HEK293T (cell line): ENCODE measurements at regions of chr11 and their contacts with region 1.

Region 1: GRCh38 chr11:61516675-61517572 is 8.4 kb downstream of the LRRC10B start:
- DNase-seq: peak; percentile 79

Region 2: GRCh38 chr11:61446211-61446651 is 70.7 kb before region 1 on chr11:
- CTCF ChIA-PET with region 1: interaction called, 36 read pairs
- POLR2A ChIA-PET with region 1: no interaction called
- DNase-seq: peak; percentile 85

Region 3: GRCh38 chr11:61477727-61478148 is 39.2 kb before region 1 on chr11:
- CTCF ChIA-PET with region 1: interaction called, 34 read pairs
- POLR2A ChIA-PET with region 1: interaction called, 3 read pairs
- DNase-seq: peak; percentile 77

Region 4: DNA sequence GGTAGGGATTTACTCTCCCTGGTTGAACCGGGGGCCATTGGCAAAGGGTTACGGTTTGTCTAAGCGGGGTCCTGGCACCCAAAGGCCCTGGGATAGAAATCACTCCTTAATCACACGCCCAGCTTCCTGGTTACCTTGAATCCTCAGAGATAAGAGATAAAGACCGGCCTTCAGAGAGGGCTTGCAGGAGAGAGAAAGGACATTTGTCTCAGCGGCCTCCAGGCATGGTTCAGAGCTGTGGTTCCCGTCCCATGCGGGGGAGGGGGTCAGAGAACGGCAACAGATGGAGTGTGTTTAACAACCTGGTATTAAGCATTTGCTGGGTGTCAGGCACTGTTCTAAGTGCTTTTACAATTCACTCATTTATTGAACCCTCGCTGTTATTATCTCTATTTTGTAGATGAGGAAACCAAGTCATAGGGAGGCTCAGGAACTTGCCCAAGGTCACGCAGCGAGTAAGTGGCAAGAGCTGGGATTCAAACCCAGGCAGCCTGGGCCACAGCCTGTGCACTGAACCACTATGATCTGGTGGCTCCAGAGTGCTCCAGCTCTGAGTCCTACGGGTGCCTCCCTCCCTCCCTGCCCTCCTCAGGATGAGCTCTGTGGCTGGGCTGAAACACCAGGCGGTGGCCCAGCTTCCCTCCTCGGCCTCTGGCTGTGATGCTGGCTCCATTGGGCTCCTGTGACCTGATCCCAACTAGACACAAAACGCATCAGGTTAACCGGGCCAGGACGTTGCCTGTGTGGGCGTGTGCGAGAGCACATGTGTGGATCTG is 10.2 kb after region 1 on chr11:
- CTCF ChIA-PET with region 1: interaction called, 21 read pairs
- POLR2A ChIA-PET with region 1: interaction called, 4 read pairs
- DNase-seq: no peak

Region 5: DNA sequence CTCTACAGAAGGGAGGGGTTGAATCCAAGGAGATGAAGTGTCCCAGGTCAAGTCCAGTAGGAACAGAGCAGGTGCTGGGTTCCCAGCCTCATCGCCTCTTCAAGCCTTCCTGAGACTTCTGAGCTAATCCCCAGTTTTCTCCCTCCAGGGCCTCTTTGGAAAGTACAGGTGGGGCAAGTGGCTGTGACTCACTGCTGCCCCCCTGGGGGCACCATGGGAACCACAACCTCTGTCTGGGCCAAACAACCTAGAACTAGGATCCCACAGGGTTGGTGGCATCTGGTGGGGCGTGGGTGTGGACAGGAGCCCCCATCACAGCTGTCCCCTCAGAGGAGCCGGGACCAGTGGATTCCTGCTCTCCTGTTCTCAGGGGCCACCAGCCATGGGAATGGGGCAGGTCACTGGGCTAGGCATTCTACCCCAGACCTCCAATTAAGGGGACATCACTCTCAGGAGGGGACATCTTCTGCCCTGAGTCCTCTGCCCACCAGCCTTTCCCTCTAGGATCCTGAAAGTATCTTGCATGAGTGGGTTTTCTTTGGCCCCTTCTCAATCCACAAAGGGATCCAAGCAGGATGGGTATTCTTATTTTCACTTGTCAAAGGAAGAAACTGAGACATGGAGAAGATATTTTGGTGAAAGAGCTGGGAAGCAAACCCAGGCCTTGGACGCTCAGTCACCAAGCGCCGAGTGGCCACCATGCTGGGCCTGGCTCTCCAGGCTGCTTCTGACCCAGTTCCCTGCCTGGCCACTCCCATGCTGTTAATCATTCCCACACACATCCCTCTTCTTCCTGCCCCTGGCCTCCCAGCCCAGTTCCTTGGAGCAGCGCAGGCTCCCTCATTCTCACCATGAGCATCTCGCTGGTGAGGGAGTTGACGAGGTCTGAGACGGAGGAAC is 15.5 kb after region 1 on chr11:
- CTCF ChIA-PET with region 1: interaction called, 21 read pairs
- POLR2A ChIA-PET with region 1: no interaction called
- DNase-seq: peak; percentile 83